Body of pancreas (tissue), 4 donors: ENCODE measurements at regions of chr1 and their contacts with region 1.

Region 1: GRCh38 chr1:24070821-24071393 is 41.0 kb downstream of the MYOM3 start:
- DNase-seq: peak; percentile 84 to 87 (median 84)
- ATAC-seq: peak; percentile 85
- H3K4me3 ChIP-seq: no peak overlapping the region
- H3K27ac ChIP-seq: no peak overlapping the region
- H3K4me1 ChIP-seq: peaks cover 18% of the 10 kb centered on the region
- H3K27me3 ChIP-seq: no peaks in the 10 kb centered on the region
- CTCF ChIP-seq: peak; percentile 76 to 97 (median 93)
- POLR2A ChIP-seq: no peak

Region 2: DNA sequence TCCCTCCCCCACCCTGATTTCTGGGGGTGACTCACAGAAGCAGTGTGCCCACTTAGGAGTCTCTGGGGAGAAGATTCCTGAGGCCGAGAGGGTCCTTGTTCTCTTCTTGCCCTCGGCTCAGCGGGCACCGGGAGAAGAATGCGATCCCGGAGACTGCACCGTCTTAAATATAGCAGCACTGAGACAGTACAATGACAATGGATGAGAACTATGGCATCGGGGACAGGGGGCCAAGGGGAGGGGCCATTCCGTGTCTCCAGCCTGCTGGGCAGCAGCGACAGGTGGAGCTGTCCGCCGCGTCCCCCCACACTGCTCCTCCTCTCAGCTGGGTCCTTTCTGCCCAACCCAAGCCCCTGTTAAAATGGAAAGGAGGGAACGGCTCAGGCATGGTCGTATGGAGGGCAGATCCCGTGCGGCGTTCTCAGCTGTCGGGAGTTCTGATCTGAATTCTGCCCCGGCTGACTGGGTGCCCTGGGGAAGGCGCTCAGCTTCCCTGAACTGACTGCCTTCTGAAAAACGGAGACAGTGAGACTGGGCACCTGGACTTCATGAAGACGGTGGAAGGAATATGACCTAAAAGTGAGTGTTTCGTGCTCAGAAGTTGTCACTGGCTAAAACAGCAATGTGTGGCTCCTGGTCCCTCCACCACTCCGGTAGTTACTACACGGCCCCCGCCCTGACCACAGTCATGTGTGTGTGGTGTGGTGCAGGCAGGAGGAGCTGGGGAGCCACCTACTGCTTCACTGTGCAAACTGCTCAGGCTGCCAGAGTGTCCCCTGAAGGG is 41.3 kb after region 1 on chr1 and contains the start of gene MYOM3:
- intact Hi-C with region 1: loop called (anchors 5 kb)
- DNase-seq: peak; percentile 70 to 83 (median 80)
- ATAC-seq: peak; percentile 75
- H3K4me3 ChIP-seq: no peak within 1 kb of the TSS
- H3K27ac ChIP-seq: no peak within 1 kb of the TSS
- H3K4me1 ChIP-seq: peaks cover 34% of the 10 kb centered on the region
- H3K27me3 ChIP-seq: no peaks in the 10 kb centered on the region
- CTCF ChIP-seq: peak in 6 of 7 experiments; percentile 22 to 77 (median 62)
- POLR2A ChIP-seq: no peak
- total RNA-seq, gene MYOM3: 2.3 to 4.3 TPM

Region 3: GRCh38 chr1:24150234-24151174 is 79.6 kb after region 1 on chr1:
- intact Hi-C with region 1: loop called (anchors 10 kb)
- DNase-seq: peak; percentile 92 to 95 (median 94)
- ATAC-seq: peak; percentile 92
- H3K4me3 ChIP-seq: no peak overlapping the region
- H3K27ac ChIP-seq: peak overlapping the region in 3 of 4 donors; percentile 26 to 55 (median 53)
- H3K4me1 ChIP-seq: peaks cover 25% of the 10 kb centered on the region
- H3K27me3 ChIP-seq: no peaks in the 10 kb centered on the region
- CTCF ChIP-seq: peak; percentile 71 to 91 (median 89)
- POLR2A ChIP-seq: peak in 1 of 3 donors; percentile 31

Region 4: DNA sequence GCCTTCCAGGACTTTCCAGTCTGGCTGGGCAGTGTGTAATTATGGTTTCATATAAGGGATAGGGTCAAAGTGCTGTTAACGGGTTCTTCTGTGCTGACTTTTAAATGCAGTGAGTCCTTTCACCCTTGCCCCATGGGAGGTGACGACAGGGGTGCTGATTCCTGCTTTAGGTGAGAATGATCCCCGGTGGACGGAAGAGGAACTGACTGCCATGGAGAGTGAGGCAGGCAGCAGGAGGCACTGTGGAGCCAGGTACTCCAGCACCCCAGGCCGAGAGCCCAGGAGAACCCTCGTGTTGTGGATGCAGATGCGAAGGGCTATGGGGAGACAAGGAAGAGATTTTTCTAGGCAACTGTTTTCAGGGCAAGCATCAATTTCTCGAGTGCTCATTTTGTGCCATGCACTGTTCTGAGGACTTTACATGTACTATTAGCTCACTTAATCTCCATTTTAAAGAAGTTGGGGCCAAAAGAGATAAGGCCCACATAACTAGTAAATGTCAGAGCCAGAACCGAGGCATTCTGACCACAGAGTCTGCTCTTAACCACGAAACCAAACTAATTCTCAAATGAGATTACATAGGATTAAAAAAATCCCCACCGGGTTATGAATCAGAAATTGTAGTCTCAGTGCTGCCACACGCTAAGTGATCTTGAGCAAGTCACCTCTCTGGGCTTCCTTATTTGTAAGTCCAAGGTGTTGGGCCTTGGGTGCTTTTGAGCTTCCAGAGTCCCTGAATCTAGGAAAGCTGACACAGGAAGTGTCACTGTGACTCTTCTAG is 314.4 kb after region 1 on chr1:
- intact Hi-C with region 1: loop called (anchors 10 kb)
- DNase-seq: no peak
- ATAC-seq: no peak
- H3K4me3 ChIP-seq: no peak overlapping the region
- H3K27ac ChIP-seq: no peak overlapping the region
- H3K4me1 ChIP-seq: peaks cover 5% of the 10 kb centered on the region
- H3K27me3 ChIP-seq: no peaks in the 10 kb centered on the region
- CTCF ChIP-seq: peak in 5 of 7 experiments; percentile 6 to 39 (median 32)
- POLR2A ChIP-seq: no peak